Activated CD4-positive, alpha-beta T cell treated with anti-CD3 and anti-CD28 coated beads for 36 hours (primary cell): ENCODE measurements at regions of chr1 and their contacts with region 1.

Region 1: GRCh38 chr1:150578965-150579798 is at the start of gene MCL1:
- DNase-seq: peak; percentile 94
- ATAC-seq: peak; percentile 81
- H3K4me3 Mint-ChIP-seq: peak within 1 kb of the TSS; percentile 95
- H3K27ac Mint-ChIP-seq: peak within 1 kb of the TSS; percentile 97
- H3K4me1 Mint-ChIP-seq: peaks cover 24% of the 10 kb centered on the region
- H3K27me3 Mint-ChIP-seq: no peaks in the 10 kb centered on the region
- total RNA-seq, gene MCL1: 185 to 265 TPM

Region 2: DNA sequence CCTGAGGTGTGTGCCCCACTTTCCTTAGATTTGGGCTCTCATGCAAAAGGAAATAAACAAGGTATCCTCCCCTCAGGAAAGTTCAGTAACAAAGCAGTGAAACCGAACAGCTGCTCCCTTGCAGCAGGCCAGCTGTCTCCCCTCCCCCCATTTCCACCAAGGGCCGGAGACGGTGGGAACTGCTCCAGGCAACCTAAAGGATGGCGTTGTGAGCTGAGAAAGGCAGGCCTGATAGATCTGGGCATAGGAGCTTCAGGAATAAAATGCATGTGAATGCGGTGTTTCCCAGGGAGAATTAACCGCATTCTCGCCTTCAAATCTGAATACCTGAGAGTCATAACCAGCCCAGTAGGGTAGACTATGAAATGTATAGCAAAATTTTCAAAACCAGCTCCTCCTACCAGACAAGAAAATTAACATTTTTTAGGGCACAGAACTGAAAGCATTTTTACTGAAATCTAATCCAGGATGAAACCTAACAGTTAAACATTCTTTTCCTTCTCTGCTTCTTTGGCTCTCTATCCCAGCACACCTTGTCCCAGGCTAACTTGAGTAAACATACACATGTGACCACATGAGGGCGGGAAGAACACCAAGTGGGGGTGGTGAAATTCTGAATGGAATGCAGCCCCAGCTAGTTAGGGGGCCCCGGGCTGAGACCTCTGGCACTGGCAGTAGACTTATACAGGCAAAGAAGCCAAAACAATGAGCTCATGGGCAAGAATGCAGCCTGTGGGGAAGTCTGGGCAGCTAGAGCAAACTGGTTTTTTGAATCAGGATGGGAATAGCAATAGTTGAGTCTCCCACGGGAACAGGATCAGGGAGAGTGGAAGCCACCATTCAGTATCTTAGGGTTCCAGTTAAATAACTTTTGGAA is 11.2 kb before region 1 on chr1:
- CTCF ChIA-PET with region 1: interaction called, 239 read pairs
- POLR2A ChIA-PET with region 1: interaction called, 333 read pairs
- intact Hi-C with region 1: loop called (anchors 1 kb)
- DNase-seq: peak; percentile 76
- ATAC-seq: peak; percentile 24
- H3K4me3 Mint-ChIP-seq: peak overlapping the region; percentile 73
- H3K27ac Mint-ChIP-seq: peak overlapping the region; percentile 99
- H3K4me1 Mint-ChIP-seq: peaks cover 95% of the 10 kb centered on the region
- H3K27me3 Mint-ChIP-seq: no peaks in the 10 kb centered on the region

Region 3: DNA sequence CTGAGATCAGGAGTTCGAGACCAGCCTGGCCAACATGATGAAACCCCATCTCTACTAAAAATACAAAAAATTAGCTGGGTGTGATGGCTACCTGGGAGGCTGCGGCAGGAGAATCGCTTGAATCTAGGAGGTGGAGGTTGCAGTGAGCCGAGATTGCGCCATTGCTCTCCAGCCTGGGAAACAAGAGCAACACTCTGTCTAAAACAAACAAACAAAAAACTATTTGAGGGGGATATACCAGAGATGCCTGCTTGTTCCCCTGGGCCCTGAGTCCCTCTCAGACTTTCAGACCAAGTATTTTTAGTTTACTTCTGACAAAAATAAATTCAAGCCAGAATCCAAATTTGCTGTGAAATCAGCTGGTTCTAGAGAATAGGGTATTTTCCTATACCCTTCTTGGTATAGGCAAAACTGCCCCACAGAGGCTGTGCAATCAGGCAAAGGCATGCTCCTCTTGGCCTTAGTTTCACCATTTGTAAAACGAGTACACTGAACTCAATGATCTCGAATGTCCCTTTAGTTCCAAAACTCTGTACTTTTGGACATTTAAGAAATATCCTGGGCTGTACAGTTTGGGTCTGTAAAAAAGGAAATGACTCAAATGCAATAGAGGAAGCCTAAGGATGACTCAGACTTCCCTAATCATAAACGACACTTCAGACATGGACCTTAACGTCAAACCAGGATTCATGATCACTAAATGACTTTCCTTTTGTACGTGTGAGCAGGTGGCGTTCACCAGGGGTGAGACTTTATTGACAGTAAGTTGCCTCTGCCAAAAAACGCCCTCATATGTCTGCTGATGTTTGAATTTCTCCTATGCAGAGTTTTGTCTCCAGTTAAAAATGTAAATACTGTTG is 34.1 kb after region 1 on chr1:
- CTCF ChIA-PET with region 1: interaction called, 461 read pairs
- POLR2A ChIA-PET with region 1: interaction called, 23 read pairs
- intact Hi-C with region 1: loop called (anchors 1 kb)
- DNase-seq: peak; percentile 78
- ATAC-seq: peak; percentile 63
- H3K4me3 Mint-ChIP-seq: peak overlapping the region; percentile 60
- H3K27ac Mint-ChIP-seq: peak overlapping the region; percentile 90
- H3K4me1 Mint-ChIP-seq: peaks cover 67% of the 10 kb centered on the region
- H3K27me3 Mint-ChIP-seq: no peaks in the 10 kb centered on the region

Region 4: GRCh38 chr1:150696590-150697524 is 117.7 kb after region 1 on chr1 and contains the start of gene GOLPH3L:
- CTCF ChIA-PET with region 1: interaction called, 3 read pairs
- POLR2A ChIA-PET with region 1: interaction called, 11 read pairs
- intact Hi-C with region 1: no loop called
- DNase-seq: peak; percentile 93
- ATAC-seq: peak; percentile 100
- H3K4me3 Mint-ChIP-seq: peak within 1 kb of the TSS; percentile 98
- H3K27ac Mint-ChIP-seq: peak within 1 kb of the TSS; percentile 92
- H3K4me1 Mint-ChIP-seq: peaks cover 21% of the 10 kb centered on the region
- H3K27me3 Mint-ChIP-seq: peaks cover 3% of the 10 kb centered on the region
- total RNA-seq, gene GOLPH3L: 24.2 to 29.1 TPM